ENCODE measurements at regions of chr16 and their contacts with region 1.

Region 1: GRCh38 chr16:4586291-4586690 is 28.4 kb downstream of the UBALD1 start:
- DNase-seq: peak in 1 of 4 experiments; percentile 9
- ATAC-seq: no peak
- H3K4me3 ChIP-seq: no peak overlapping the region
- H3K27ac ChIP-seq: no peak overlapping the region
- H3K4me1 ChIP-seq: peaks cover 0 to 8% of the 10 kb centered on the region in 2 experiments; a peak in 1 of 5 replicates
- H3K27me3 ChIP-seq: peaks cover 23 to 56% of the 10 kb centered on the region in 2 experiments; a peak in 4 of 5 replicates
- CTCF ChIP-seq: no peak
- EP300 ChIP-seq: no peak
- POLR2A ChIP-seq: no peak
- RAD21 ChIP-seq: no peak

Region 2: DNA sequence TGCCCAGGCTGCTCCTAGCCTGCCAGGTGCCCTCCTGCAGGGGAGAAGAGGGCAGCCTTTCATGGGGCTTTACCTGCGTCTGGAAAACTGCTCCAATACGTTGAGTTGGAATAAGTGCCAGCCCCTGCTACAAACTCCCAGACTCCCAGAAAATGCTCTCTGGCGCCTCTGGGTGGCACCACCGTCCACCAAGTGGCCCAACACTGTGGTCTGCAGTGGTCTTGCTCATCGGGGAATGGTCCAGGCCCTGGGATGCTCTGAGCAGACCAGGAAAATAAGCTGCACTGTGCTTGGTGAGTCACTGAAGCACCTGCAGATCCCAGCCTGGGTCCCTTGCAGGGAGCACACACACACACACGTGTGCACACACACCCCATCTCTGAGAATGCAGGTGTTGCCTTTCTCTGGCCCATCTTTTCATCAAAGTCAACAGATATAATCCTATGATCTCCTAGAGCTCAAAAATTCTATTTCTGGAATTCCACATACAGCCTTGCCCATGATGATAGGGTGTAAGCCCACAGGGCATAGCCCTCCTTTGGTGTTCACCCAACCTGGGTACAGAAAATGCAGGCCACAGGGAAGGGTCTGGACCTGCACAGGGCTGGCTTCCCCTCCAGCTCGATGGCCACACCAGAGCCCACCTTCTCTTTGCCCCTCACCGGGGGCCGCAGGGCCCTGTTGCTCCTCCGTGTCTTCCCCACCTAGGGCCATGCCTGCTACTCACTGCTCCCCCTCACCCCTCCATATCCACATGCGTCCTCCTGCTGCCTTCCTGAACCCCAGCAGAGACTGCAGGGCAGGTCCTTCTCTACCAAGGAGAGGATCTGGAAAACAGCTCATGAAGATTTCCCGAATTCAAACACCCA is 68.2 kb before region 1 on chr16:
- CTCF ChIA-PET with region 1: interaction called, 10 read pairs
- POLR2A ChIA-PET with region 1: no interaction called
- in situ Hi-C with region 1: loop called (anchors 5 kb)
- intact Hi-C with region 1: loop called (anchors 2 kb)
- DNase-seq: peak; percentile 46 to 59 (median 54)
- ATAC-seq: peak; percentile 90
- H3K4me3 ChIP-seq: no peak overlapping the region
- H3K27ac ChIP-seq: no peak overlapping the region
- H3K4me1 ChIP-seq: peaks cover 6 to 23% of the 10 kb centered on the region in 2 experiments; a peak in 4 of 5 replicates
- H3K27me3 ChIP-seq: no peaks in the 10 kb centered on the region
- CTCF ChIP-seq: peak; percentile 84 to 88 (median 85)
- EP300 ChIP-seq: no peak
- POLR2A ChIP-seq: no peak
- RAD21 ChIP-seq: peak; percentile 70 to 84

Region 3: GRCh38 chr16:4574919-4575705 is 11.2 kb before region 1 on chr16:
- CTCF ChIA-PET with region 1: no interaction called
- POLR2A ChIA-PET with region 1: no interaction called
- in situ Hi-C with region 1: no loop called
- intact Hi-C with region 1: no loop called
- DNase-seq: peak in 2 of 4 experiments; percentile 20 to 31
- ATAC-seq: peak; percentile 49
- H3K4me3 ChIP-seq: no peak overlapping the region
- H3K27ac ChIP-seq: no peak overlapping the region
- H3K4me1 ChIP-seq: peaks cover 0 to 3% of the 10 kb centered on the region in 2 experiments; a peak in 1 of 5 replicates
- H3K27me3 ChIP-seq: peaks cover 19 to 61% of the 10 kb centered on the region in 2 experiments; a peak in 4 of 5 replicates
- CTCF ChIP-seq: peak in 2 of 3 experiments; percentile 2 to 23; a peak in 1 of 6 replicates
- EP300 ChIP-seq: no peak
- POLR2A ChIP-seq: no peak
- RAD21 ChIP-seq: no peak

Region 4: DNA sequence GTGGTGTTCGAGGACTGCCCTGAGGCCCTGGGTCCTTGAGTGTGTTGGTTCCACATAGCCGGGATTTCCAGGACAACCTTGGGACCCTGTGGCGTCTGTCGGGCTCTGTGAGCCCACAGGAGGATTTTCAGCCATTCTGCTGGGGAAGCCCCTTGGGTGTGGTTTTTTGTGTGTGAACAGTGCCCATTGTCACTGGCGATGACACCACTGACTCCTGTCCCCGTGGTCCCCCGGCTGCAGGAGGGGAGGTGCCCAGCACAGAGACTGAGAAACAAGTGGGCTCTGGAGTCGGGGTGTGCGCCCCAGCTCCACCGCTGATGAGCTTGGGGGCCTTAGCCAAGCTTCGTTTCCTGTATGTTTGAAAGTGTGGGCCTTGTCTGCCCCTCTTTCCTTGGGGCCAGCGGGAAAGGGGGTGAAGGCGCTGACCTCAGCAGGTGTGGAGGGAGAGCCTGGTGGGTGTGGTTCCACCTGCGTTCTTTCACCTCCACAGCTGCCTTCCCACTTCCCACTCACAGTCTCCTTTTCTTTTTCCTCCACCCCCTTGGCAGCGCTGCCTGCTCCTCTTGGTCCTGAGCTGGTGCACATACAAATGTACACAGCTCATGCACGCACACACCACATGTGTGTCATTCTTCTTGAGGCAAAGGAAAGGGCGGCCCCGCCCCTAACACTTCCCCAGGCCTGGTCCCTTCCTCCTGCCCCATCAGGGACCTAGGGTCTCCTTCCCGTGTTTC is 54.4 kb after region 1 on chr16:
- CTCF ChIA-PET with region 1: no interaction called
- POLR2A ChIA-PET with region 1: no interaction called
- in situ Hi-C with region 1: no loop called
- intact Hi-C with region 1: no loop called
- DNase-seq: no peak
- ATAC-seq: peak; percentile 35; the same call in 2 of the 3 replicates
- H3K4me3 ChIP-seq: no peak overlapping the region
- H3K27ac ChIP-seq: no peak overlapping the region
- H3K4me1 ChIP-seq: peaks cover 0 to 31% of the 10 kb centered on the region in 2 experiments; a peak in 1 of 5 replicates
- H3K27me3 ChIP-seq: no peaks in the 10 kb centered on the region
- CTCF ChIP-seq: no peak
- EP300 ChIP-seq: no peak
- POLR2A ChIP-seq: no peak
- RAD21 ChIP-seq: no peak